Activated CD8-positive, alpha-beta T cell treated with anti-CD3 and anti-CD28 coated beads for 36 hours (primary cell): ENCODE measurements at regions of chr9 and their contacts with region 1.

Region 1: DNA sequence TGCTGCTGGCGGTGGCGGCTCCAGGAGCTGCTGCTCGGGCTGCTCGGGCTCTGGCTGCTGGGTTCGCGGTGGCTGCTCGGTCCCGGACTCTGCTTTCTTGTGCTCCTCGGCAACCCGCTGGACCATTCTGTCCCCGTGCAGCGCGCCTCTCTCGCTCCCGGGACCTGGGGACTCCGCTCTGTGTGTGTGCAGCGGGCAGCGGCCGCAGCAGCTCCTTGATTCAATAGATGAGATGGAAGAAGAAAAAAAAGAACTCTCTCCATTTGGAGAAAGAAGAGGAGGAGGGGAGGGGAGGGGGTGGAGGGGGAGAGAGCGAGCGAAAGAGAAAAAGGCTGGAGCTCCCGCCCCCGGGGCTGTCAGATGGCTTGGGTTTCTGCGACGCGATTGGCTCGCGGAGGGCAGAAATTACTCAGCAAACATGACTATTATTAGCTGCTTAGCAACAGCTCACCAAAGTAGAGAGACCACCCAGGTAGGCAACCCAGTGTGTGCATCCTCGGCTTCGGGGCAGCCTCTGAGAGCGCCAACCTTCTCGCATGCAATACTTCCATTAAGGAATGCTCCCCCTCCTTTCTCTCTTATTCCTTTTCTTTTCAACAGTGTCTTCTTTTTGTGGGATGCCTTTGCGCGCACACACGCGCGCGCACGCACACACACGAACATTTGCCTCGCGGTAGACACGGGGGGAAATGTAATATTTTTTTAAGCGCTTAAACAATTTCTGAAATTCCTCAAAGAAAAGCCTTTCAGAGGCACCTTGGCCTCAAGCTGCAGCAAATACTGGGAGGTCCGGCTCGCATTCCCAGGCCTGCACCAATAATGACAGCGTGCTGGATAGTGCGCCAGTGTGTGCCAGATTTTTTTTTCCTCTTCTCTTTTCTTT is 7.6 kb downstream of the PTCH1 start:
- DNase-seq: peak; percentile 88
- ATAC-seq: peak; percentile 28
- H3K4me3 Mint-ChIP-seq: peak overlapping the region; percentile 94
- H3K27ac Mint-ChIP-seq: peak overlapping the region; percentile 30
- H3K4me1 Mint-ChIP-seq: peaks cover 30% of the 10 kb centered on the region
- H3K27me3 Mint-ChIP-seq: peaks cover 24% of the 10 kb centered on the region
- CTCF ChIP-seq: no peak

Region 2: DNA sequence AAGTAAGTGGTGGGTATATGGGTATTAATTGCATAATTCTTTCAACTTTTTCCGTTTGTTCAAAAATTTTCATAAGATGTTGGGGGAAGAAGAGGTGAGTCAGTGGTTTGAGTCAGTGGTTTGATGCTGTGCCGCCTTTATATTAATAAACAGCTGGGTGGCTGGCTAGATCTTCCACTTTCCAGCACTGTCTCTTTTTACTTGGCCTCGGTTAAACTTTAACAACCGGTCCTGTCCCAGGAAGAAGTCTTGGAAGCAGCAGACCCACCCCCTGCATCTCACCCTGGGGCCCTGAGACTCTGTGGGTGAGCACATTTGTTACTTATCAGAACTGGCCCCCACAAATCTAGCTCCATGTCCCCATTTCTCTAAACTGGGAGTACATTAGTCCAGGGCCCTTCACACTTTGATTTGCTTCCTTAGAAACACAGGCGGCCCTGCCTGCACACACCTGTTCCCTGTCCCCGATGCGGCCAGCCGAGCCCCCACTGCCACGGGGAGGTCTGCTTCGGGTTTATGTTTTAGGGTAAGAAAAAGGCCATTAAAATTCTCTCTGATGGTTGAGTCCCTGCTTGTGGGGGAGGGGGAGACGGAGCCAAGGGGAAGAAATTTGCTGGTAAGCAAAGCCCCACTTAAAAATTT is 83.2 kb before region 1 on chr9:
- CTCF ChIA-PET with region 1: no interaction called
- POLR2A ChIA-PET with region 1: no interaction called
- intact Hi-C with region 1: loop called (anchors 10 kb)
- DNase-seq: peak; percentile 21
- ATAC-seq: peak; percentile 25
- H3K4me3 Mint-ChIP-seq: peak overlapping the region; percentile 76
- H3K27ac Mint-ChIP-seq: peak overlapping the region; percentile 57
- H3K4me1 Mint-ChIP-seq: peaks cover 12% of the 10 kb centered on the region
- H3K27me3 Mint-ChIP-seq: peaks cover 5% of the 10 kb centered on the region
- CTCF ChIP-seq: no peak

Region 3: DNA sequence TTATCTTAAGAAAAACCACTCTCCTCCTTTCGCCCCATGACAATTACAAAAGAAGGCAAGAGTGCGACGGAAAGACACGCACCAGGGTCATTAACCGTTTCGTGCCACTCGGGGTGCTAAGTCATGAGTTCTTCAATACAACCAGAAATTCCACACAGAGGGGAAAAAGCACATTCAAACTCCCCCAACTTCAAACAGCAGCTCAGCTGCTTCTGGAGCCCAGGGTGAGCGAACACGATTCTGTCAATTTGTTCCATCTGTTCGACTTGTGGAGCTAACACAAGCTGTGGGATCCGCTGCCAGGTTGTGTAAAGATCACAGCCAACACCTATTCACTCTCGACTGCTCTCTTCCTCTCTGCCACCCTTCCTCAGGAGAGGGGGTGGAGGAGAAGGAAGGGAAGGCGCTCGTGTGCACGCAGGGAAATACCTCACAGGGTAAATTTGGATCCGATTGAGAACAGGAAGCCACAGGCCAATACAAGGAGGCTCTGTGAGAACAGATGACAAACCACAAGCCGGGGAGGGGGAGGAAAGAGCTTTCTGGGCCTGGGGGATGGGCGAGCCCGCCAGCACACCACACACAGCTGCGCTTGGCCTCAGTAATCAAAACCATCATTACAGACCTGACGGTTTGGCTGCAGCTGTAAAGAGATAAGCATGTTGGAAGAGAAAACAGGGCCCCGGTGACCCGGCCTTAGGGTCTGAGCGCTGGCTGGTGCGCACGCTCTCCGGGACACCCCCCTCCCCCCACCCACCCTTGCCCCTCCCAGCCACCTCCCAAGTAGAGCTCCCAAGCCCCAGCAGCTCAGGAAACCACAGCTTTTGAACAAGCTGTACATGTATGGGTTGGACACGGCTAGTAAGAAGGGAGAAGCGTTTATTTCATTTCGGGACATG is 46.7 kb before region 1 on chr9:
- CTCF ChIA-PET with region 1: interaction called, 4 read pairs
- POLR2A ChIA-PET with region 1: interaction called, 4 read pairs
- intact Hi-C with region 1: loop called (anchors 5 kb)
- DNase-seq: peak; percentile 90
- ATAC-seq: peak; percentile 92
- H3K4me3 Mint-ChIP-seq: peak overlapping the region; percentile 65
- H3K27ac Mint-ChIP-seq: peak overlapping the region; percentile 81
- H3K4me1 Mint-ChIP-seq: peaks cover 30% of the 10 kb centered on the region
- H3K27me3 Mint-ChIP-seq: peaks cover 1% of the 10 kb centered on the region
- CTCF ChIP-seq: no peak

Region 4: GRCh38 chr9:95533996-95534680 is 24.9 kb after region 1 on chr9:
- CTCF ChIA-PET with region 1: no interaction called
- POLR2A ChIA-PET with region 1: no interaction called
- intact Hi-C with region 1: no loop called
- DNase-seq: no peak
- ATAC-seq: no peak
- H3K4me3 Mint-ChIP-seq: no peak overlapping the region
- H3K27ac Mint-ChIP-seq: no peak overlapping the region
- H3K4me1 Mint-ChIP-seq: no peaks in the 10 kb centered on the region
- H3K27me3 Mint-ChIP-seq: peaks cover 6% of the 10 kb centered on the region
- CTCF ChIP-seq: no peak